ENCODE measurements at regions of chr17 and their contacts with region 1.

Region 1: DNA sequence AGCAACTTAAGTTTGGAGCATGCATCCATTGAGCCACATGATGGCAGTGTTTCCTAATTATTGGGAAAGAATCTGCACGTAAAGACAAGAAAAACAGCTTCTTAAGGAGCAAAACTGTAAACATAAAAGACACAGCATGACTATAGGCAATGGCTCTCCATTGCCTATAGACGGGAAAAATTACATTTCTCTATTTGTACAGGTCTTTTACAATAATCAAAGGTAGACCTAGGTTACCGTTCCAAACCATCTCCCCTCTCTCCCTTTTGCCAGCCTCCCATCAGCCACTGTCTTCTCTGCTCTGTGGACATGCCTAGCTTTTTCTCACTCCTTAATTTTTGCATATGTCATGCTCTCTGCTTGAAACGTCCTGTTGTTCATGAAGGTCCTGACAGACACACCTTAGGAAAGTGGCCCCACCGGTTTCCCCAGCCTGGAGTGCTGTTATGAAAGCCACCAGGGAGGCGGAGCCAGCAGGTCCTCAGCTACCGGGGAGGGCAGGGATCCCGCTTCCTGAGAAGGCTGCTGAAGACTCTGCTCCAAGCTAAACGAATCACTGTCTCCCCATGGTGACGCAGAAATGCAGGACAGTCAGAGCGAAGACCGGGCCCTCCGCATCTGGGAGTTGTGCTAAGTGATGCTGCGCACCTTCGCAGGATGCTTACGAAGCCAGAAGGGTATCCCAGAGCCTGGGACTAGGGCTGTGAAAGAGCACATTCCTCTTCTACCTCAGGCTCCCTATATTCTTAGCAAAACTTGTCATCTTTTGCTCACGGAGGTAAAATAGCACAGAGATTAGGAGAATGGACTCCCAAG is 2.2 kb upstream of the SLC16A11 start:
- DNase-seq: peak in 6 of 9 experiments; percentile 43 to 88 (median 59)
- ATAC-seq: peak; percentile 34
- H3K4me3 ChIP-seq: peak overlapping the region; percentile 42 to 58
- H3K4me3 Mint-ChIP-seq: peak overlapping the region; percentile 79
- H3K27ac ChIP-seq: peak overlapping the region; percentile 47 to 73
- H3K27ac Mint-ChIP-seq: peak overlapping the region; percentile 88
- H3K4me1 ChIP-seq: peaks cover 35% of the 10 kb centered on the region
- H3K4me1 Mint-ChIP-seq: peaks cover 36% of the 10 kb centered on the region
- H3K27me3 ChIP-seq: no peaks in the 10 kb centered on the region
- H3K27me3 Mint-ChIP-seq: no peaks in the 10 kb centered on the region
- CTCF ChIP-seq: peak; percentile 89

Region 2: DNA sequence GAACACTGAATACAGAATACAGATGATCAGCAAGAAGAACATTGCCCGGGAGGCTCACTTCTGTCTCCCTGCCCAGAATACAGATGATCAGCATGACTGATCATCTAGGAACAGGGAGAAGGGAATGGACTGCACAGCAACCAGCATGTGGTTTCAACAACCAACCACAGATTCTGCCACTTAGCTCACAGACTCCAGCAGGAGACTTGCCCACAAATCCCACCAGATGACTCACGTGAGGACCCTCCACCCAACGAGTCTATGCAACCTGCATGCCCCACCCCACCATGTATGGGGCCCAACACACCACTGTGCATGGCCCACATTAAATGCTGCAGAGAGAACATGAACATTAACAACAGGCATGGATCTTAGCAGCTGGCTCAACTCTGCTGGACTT is 86.4 kb before region 1 on chr17:
- CTCF ChIA-PET with region 1: no interaction called
- POLR2A ChIA-PET with region 1: no interaction called
- intact Hi-C with region 1: no loop called
- DNase-seq: no peak
- ATAC-seq: no peak
- H3K4me3 ChIP-seq: no peak overlapping the region
- H3K4me3 Mint-ChIP-seq: no peak overlapping the region
- H3K27ac ChIP-seq: no peak overlapping the region
- H3K27ac Mint-ChIP-seq: no peak overlapping the region
- H3K4me1 ChIP-seq: no peaks in the 10 kb centered on the region
- H3K4me1 Mint-ChIP-seq: no peaks in the 10 kb centered on the region
- H3K27me3 ChIP-seq: no peaks in the 10 kb centered on the region
- H3K27me3 Mint-ChIP-seq: peaks cover 4% of the 10 kb centered on the region
- CTCF ChIP-seq: no peak

Region 3: DNA sequence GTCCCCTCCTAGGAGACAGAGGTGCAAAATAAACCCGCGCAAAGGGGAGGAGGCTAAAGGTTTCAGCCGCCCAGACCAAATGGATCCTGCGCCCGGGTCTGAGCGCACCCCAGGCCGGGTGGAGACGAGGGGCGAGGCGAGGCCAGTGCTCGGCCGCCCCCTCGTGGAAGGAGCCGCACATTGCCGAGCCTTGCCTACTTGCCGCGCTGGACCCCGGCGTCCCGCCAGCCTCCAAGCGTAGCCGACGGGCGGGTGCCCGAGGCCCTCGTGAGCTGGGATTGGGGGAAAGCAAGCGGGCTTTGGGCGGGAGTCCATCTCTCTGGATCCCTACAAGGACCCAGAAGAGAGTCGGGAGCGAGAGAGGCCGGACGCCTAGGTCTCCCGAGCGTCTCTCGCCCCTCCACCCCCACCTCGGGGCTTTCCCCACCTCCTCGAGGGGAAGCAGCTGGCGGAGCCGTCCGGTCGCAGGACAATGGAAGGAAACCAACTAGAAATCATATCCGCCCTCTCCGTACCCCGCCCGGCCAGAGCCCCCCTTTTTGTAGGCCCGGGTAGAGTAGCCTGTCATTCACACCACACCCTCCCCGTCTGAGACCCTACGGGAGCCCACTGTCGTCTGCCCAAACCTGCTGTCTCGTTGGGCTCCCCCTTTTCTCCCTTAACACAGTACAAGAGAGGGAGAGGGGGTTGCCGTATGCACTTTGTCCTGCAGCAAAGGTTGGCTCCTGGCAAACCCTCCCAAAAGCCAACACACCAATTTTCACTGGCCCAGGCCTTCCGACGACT is 23.9 kb before region 1 on chr17:
- CTCF ChIA-PET with region 1: interaction called, 53 read pairs
- POLR2A ChIA-PET with region 1: interaction called, 4 read pairs
- intact Hi-C with region 1: loop called in 1 of 2 experiments (anchors 2 kb)
- DNase-seq: peak; percentile 58 to 88 (median 76)
- ATAC-seq: peak; percentile 61
- H3K4me3 ChIP-seq: peak overlapping the region; percentile 17 to 41
- H3K4me3 Mint-ChIP-seq: peak overlapping the region; percentile 74
- H3K27ac ChIP-seq: peak overlapping the region in 1 of 2 experiments; percentile 46
- H3K27ac Mint-ChIP-seq: peak overlapping the region; percentile 37
- H3K4me1 ChIP-seq: peaks cover 42% of the 10 kb centered on the region
- H3K4me1 Mint-ChIP-seq: peaks cover 46% of the 10 kb centered on the region
- H3K27me3 ChIP-seq: no peaks in the 10 kb centered on the region
- H3K27me3 Mint-ChIP-seq: peaks cover 3% of the 10 kb centered on the region
- CTCF ChIP-seq: peak; percentile 98

Region 4: GRCh38 chr17:7060165-7060891 is 14.2 kb after region 1 on chr17:
- CTCF ChIA-PET with region 1: interaction called, 10 read pairs
- POLR2A ChIA-PET with region 1: no interaction called
- intact Hi-C with region 1: no loop called
- DNase-seq: no peak
- ATAC-seq: no peak
- H3K4me3 ChIP-seq: no peak overlapping the region
- H3K4me3 Mint-ChIP-seq: no peak overlapping the region
- H3K27ac ChIP-seq: no peak overlapping the region
- H3K27ac Mint-ChIP-seq: no peak overlapping the region
- H3K4me1 ChIP-seq: no peaks in the 10 kb centered on the region
- H3K4me1 Mint-ChIP-seq: no peaks in the 10 kb centered on the region
- H3K27me3 ChIP-seq: no peaks in the 10 kb centered on the region
- H3K27me3 Mint-ChIP-seq: peaks cover 6% of the 10 kb centered on the region
- CTCF ChIP-seq: no peak

Region 5: GRCh38 chr17:7136266-7136877 is 90.3 kb after region 1 on chr17:
- CTCF ChIA-PET with region 1: interaction called, 349 read pairs
- POLR2A ChIA-PET with region 1: interaction called, 22 read pairs
- intact Hi-C with region 1: loop called (anchors 1 kb)
- DNase-seq: peak; percentile 56 to 88 (median 82)
- ATAC-seq: no peak
- H3K4me3 ChIP-seq: no peak overlapping the region
- H3K4me3 Mint-ChIP-seq: no peak overlapping the region
- H3K27ac ChIP-seq: no peak overlapping the region
- H3K27ac Mint-ChIP-seq: no peak overlapping the region
- H3K4me1 ChIP-seq: peaks cover 6% of the 10 kb centered on the region
- H3K4me1 Mint-ChIP-seq: peaks cover 22% of the 10 kb centered on the region
- H3K27me3 ChIP-seq: no peaks in the 10 kb centered on the region
- H3K27me3 Mint-ChIP-seq: peaks cover 10% of the 10 kb centered on the region
- CTCF ChIP-seq: peak; percentile 99

Region 6: DNA sequence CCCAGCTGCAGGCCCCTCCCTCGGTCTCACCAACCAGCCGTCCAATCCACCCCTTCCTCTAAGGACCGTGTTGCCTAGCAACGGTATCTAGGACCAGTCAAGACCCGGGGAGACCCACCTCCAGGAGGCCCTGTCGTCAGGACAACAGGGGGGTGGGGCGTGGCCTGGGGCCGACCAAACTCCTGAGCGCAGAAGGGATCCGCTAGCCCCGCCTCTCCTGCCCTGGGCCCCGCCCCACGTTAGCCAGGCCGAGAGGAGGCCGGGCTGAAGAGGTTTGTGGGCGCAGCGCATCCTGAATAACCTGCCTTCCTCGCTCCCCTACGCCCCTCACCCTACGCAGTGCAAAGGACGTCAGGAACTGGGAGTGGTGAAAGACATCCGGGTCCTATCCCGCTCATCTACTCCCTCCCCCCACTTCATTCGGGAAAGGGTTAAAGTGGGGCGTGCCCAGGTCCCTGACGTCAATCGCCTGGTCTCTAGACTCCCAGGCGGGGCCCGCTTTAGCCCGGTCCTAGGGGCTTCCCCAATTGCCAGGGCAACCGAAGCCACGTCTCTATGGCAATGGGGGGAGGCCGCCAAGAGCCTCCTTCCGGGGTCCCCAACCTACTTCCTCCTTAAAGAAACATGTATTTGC is 158.8 kb after region 1 on chr17:
- CTCF ChIA-PET with region 1: no interaction called
- POLR2A ChIA-PET with region 1: no interaction called
- intact Hi-C with region 1: loop called in 1 of 2 experiments (anchors 10 kb)
- DNase-seq: peak; percentile 87 to 100 (median 96)
- ATAC-seq: peak; percentile 84
- H3K4me3 ChIP-seq: peak overlapping the region; percentile 55 to 73
- H3K4me3 Mint-ChIP-seq: peak overlapping the region; percentile 87
- H3K27ac ChIP-seq: peak overlapping the region; percentile 90
- H3K27ac Mint-ChIP-seq: peak overlapping the region; percentile 91
- H3K4me1 ChIP-seq: peaks cover 20% of the 10 kb centered on the region
- H3K4me1 Mint-ChIP-seq: peaks cover 29% of the 10 kb centered on the region
- H3K27me3 ChIP-seq: no peaks in the 10 kb centered on the region
- H3K27me3 Mint-ChIP-seq: no peaks in the 10 kb centered on the region
- CTCF ChIP-seq: no peak

Region 7: GRCh38 chr17:7296189-7296902 is 250.2 kb after region 1 on chr17:
- CTCF ChIA-PET with region 1: interaction called, 28 read pairs
- POLR2A ChIA-PET with region 1: no interaction called
- intact Hi-C with region 1: loop called in 1 of 2 experiments (anchors 5 kb)
- DNase-seq: peak in 7 of 9 experiments; percentile 54 to 82 (median 75)
- ATAC-seq: no peak
- H3K4me3 ChIP-seq: no peak overlapping the region
- H3K4me3 Mint-ChIP-seq: peak overlapping the region; percentile 75
- H3K27ac ChIP-seq: no peak overlapping the region
- H3K27ac Mint-ChIP-seq: no peak overlapping the region
- H3K4me1 ChIP-seq: peaks cover 25% of the 10 kb centered on the region
- H3K4me1 Mint-ChIP-seq: peaks cover 19% of the 10 kb centered on the region
- H3K27me3 ChIP-seq: peaks cover 0 to 15% of the 10 kb centered on the region in 2 experiments
- H3K27me3 Mint-ChIP-seq: peaks cover 9% of the 10 kb centered on the region
- CTCF ChIP-seq: peak; percentile 89